GM10248 (cell line): ENCODE measurements at regions of chr2 and their contacts with region 1.

Region 1: GRCh38 chr2:86105252-86105968 is at the start of gene POLR1A:
- DNase-seq: peak; percentile 75
- CTCF ChIP-seq: no peak

Region 2: GRCh38 chr2:85971366-85971765 is 134.0 kb before region 1 on chr2:
- CTCF ChIA-PET with region 1: no interaction called
- POLR2A ChIA-PET with region 1: no interaction called
- DNase-seq: no peak
- CTCF ChIP-seq: no peak

Region 3: GRCh38 chr2:86118133-86118532 is 12.7 kb after region 1 on chr2:
- CTCF ChIA-PET with region 1: interaction called, 13 read pairs
- POLR2A ChIA-PET with region 1: no interaction called
- DNase-seq: no peak
- CTCF ChIP-seq: no peak